Caco-2 (cell line): ENCODE measurements at regions of chr4 and their contacts with region 1.

Region 1: DNA sequence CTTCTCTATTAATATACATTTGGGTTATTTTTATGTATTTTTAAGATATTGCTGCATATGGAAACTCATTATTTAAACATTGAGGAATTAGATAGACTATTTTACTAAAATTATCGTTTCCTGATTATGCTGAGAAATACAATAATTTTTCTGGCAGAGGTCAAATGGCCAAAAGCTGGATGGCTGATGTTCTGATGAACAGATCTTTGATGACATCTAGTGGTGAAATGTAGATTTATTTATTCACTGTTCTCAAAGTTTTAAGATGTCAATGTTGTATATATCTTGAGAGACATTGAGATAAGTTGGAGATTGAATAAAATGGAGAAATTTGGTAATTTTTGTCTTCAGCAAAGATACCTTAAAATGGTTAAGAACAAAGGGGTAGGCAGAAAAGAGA is 96.2 kb downstream of the UGT8 start:
- DNase-seq: peak in 1 of 2 experiments; percentile 12
- H3K4me3 ChIP-seq: no peak overlapping the region
- H3K4me3 Mint-ChIP-seq: no peak overlapping the region
- H3K27ac Mint-ChIP-seq: no peak overlapping the region
- H3K4me1 ChIP-seq: no peaks in the 10 kb centered on the region
- H3K4me1 Mint-ChIP-seq: no peaks in the 10 kb centered on the region
- H3K27me3 ChIP-seq: no peaks in the 10 kb centered on the region
- H3K27me3 Mint-ChIP-seq: peaks cover 2% of the 10 kb centered on the region
- CTCF ChIP-seq: peak; percentile 15 to 64

Region 2: DNA sequence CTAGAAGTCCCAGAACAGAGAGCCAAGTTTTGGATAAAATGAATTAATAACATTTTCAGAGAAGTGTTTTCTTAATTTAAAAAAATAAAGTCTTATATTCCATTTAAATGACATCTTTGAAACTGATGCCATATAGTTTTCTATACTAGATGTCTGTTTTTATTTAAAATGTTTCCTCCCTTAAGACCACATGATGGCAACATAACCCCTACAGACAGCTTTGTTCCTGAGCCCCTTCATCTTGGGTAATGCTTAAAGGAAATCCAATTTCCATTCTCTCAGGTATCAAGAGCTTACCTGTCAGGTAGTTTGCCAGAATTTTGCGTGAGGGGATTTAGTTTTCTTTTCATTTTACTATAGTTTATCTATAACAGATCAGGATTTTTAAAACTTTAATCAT is 277.6 kb before region 1 on chr4:
- CTCF ChIA-PET with region 1: interaction called, 9 read pairs
- POLR2A ChIA-PET with region 1: no interaction called
- intact Hi-C with region 1: loop called (anchors 1 kb)
- DNase-seq: peak in 1 of 2 experiments; percentile 10
- H3K4me3 ChIP-seq: no peak overlapping the region
- H3K4me3 Mint-ChIP-seq: no peak overlapping the region
- H3K27ac Mint-ChIP-seq: no peak overlapping the region
- H3K4me1 ChIP-seq: peaks cover 7% of the 10 kb centered on the region; the same call in 1 of the 2 replicates
- H3K4me1 Mint-ChIP-seq: no peaks in the 10 kb centered on the region
- H3K27me3 ChIP-seq: no peaks in the 10 kb centered on the region
- H3K27me3 Mint-ChIP-seq: no peaks in the 10 kb centered on the region
- CTCF ChIP-seq: peak in 1 of 2 experiments; percentile 25

Region 3: DNA sequence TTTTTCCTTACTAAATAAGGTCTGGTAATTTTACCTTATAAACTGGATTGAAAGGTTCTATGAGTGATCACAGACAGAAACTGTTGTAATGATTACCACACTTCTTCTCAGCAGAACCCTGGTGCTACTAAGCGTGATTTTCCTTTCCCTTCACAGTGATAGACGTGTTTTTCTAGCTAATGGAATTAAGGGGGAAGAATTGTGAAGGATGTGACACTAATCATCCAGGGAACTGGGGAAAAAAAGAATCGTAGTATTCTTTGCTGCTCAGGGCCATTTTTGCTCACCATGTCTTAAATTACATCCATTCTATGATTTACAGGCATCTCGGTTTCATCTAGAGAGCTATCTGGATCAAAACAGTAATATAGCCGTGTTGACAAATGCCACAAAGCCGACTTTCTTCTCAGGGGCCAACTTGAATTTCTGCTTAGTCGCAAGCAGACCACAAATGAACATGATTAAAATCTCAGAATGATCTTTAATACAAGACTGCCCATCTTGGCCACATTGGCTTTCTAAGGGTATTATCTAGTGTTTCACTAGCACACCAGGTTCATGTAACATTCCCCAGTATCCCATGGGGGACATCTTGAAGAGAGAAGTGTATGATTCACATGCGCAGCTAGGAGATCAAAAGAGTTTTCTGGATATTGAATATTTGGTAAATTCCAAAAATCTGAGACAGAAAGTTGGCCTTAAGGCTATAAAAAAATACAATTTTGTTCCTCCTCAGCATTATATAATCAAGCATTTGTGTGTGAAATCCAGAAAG is 57.8 kb after region 1 on chr4:
- CTCF ChIA-PET with region 1: no interaction called
- POLR2A ChIA-PET with region 1: no interaction called
- intact Hi-C with region 1: no loop called
- DNase-seq: no peak
- H3K4me3 ChIP-seq: no peak overlapping the region
- H3K4me3 Mint-ChIP-seq: no peak overlapping the region
- H3K27ac Mint-ChIP-seq: no peak overlapping the region
- H3K4me1 ChIP-seq: no peaks in the 10 kb centered on the region
- H3K4me1 Mint-ChIP-seq: no peaks in the 10 kb centered on the region
- H3K27me3 ChIP-seq: no peaks in the 10 kb centered on the region
- H3K27me3 Mint-ChIP-seq: peaks cover 4% of the 10 kb centered on the region
- CTCF ChIP-seq: no peak